ENCODE measurements at regions of chr2 and their contacts with region 1.

Region 1: GRCh38 chr2:96208143-96209010 is at the start of gene STARD7:
- DNase-seq: peak; percentile 97
- ATAC-seq: peak; percentile 92
- H3K4me3 ChIP-seq: peak within 1 kb of the TSS; percentile 60
- H3K27ac ChIP-seq: peak within 1 kb of the TSS; percentile 76
- H3K4me1 ChIP-seq: peaks cover 14% of the 10 kb centered on the region
- H3K27me3 ChIP-seq: no peaks in the 10 kb centered on the region
- CTCF ChIP-seq: peak; percentile 22; the same call in 1 of the 2 replicates
- POLR2A ChIP-seq: peak; percentile 89
- RAD21 ChIP-seq: peak; percentile 24; the same call in 1 of the 2 replicates
- total RNA-seq, gene STARD7: 138 and 189 TPM in 2 replicates

Region 2: DNA sequence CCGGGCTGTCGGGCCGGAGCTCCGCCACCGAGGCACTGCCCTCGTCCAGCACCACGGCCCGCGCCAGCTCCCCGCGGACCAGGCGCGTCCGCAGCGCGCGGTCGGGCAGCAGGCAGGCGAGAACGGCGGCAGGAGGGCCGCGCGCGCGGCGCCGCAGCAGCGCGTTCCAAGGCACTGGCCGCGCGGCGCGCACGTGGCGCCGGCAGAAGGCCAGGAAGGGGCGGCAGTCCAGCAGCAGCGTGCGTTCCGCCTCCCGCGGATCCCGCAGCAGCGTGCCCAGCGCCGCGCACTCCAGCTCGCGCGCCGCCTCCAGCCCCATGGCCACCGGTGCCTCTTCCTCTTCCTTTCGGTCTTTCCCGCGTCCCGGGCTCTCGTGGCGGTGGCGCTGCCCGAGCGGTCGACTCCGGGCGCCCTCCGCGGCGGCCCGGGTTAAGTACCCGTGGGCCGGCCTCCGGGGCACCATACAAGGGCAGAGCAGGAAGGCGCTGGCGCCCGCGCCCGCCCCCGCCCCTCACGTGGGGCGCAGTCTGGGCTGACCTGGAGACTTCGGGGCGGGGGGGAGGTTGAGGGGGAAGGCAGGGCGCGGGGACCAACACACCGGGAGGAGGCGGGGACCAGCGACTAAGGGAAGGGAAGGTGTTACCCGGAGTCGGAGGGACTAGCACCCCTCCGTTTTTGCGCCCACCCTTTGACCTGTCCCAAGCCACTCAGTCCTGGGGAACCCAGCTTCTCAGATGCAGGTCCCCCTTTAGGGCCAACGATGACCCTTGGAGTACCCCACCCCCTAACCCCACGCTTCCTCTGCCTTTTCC is 63.1 kb before region 1 on chr2 and contains the start of gene DUSP2:
- CTCF ChIA-PET with region 1: no interaction called
- POLR2A ChIA-PET with region 1: no interaction called
- dilution Hi-C with region 1: no loop called
- in situ Hi-C with region 1: no loop called
- intact Hi-C with region 1: loop called (anchors 5 kb)
- DNase-seq: peak; percentile 59
- ATAC-seq: peak; percentile 85
- H3K4me3 ChIP-seq: peak within 1 kb of the TSS; percentile 65
- H3K27ac ChIP-seq: no peak within 1 kb of the TSS; the same call in 1 of the 2 replicates
- H3K4me1 ChIP-seq: peaks cover 5% of the 10 kb centered on the region; the same call in 1 of the 2 replicates
- H3K27me3 ChIP-seq: no peaks in the 10 kb centered on the region
- CTCF ChIP-seq: no peak
- POLR2A ChIP-seq: peak; percentile 95
- RAD21 ChIP-seq: no peak
- total RNA-seq, gene DUSP2: 1.8 and 2.5 TPM in 2 replicates

Region 3: GRCh38 chr2:96191937-96192670 is 16.3 kb before region 1 on chr2:
- CTCF ChIA-PET with region 1: no interaction called
- POLR2A ChIA-PET with region 1: no interaction called
- dilution Hi-C with region 1: no loop called
- in situ Hi-C with region 1: no loop called
- intact Hi-C with region 1: no loop called
- DNase-seq: no peak
- ATAC-seq: no peak
- H3K4me3 ChIP-seq: no peak overlapping the region
- H3K27ac ChIP-seq: no peak overlapping the region
- H3K4me1 ChIP-seq: peaks cover 9% of the 10 kb centered on the region
- H3K27me3 ChIP-seq: no peaks in the 10 kb centered on the region
- CTCF ChIP-seq: no peak
- POLR2A ChIP-seq: no peak
- RAD21 ChIP-seq: no peak

Region 4: DNA sequence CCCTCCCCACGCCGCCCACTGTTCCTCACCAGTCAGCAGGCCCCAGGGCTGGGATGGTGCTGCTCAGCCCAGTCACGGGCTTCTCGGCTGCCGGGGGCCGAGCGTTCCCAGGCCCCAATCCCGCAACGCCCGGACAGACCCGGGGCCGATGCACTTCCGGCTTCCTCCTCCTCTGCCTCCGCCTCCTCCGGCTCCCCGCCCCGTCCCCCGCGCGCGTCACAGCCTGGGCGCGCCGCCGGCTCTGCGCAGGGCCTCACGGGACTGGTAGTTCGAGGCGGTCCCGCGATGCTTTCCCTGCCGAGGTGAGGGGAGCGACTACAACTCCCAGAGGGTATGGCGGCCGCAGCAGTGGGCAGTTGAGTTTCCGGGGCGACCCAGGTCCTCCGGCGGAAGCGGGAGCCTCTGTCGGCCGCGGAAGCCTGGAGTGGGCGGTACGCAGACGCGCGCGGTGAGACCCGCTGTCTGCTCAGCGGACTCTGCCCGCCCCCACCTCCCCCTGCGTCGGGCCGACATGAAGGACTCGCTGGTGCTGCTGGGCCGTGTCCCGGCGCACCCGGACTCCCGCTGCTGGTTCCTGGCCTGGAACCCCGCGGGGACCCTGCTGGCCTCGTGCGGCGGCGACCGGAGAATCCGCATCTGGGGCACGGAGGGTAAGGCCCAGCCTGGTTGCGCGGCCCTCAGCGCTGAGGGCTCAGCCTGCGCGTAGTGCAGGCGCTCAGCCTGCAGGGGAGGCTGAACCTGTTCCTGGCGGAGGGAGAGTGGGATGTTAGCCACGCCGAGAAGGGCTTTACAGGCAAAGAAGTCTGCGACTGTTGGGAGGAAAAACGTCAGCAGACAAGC is 57.7 kb after region 1 on chr2 and contains the starts of genes CIAO1 and TMEM127:
- CTCF ChIA-PET with region 1: interaction called, 4 read pairs
- POLR2A ChIA-PET with region 1: no interaction called
- dilution Hi-C with region 1: no loop called
- in situ Hi-C with region 1: no loop called
- intact Hi-C with region 1: loop called (anchors 1 kb)
- DNase-seq: peak; percentile 98
- ATAC-seq: peak; percentile 97
- H3K4me3 ChIP-seq: peak within 1 kb of the TSS; percentile 84
- H3K27ac ChIP-seq: peak within 1 kb of the TSS; percentile 82
- H3K4me1 ChIP-seq: peaks cover 5% of the 10 kb centered on the region
- H3K27me3 ChIP-seq: no peaks in the 10 kb centered on the region
- CTCF ChIP-seq: 0 out of 2 replicates have a peak, but pooled peaks have one; percentile 17
- POLR2A ChIP-seq: peak; percentile 84
- RAD21 ChIP-seq: no peak; the same call in 1 of the 2 replicates
- total RNA-seq, gene CIAO1: 85.5 and 94.3 TPM in 2 replicates
- total RNA-seq, gene TMEM127: 20.0 and 35.7 TPM in 2 replicates

Measured in IMR-90 (cell line).